ENCODE measurements at regions of chr5 and their contacts with region 1.

Region 1: DNA sequence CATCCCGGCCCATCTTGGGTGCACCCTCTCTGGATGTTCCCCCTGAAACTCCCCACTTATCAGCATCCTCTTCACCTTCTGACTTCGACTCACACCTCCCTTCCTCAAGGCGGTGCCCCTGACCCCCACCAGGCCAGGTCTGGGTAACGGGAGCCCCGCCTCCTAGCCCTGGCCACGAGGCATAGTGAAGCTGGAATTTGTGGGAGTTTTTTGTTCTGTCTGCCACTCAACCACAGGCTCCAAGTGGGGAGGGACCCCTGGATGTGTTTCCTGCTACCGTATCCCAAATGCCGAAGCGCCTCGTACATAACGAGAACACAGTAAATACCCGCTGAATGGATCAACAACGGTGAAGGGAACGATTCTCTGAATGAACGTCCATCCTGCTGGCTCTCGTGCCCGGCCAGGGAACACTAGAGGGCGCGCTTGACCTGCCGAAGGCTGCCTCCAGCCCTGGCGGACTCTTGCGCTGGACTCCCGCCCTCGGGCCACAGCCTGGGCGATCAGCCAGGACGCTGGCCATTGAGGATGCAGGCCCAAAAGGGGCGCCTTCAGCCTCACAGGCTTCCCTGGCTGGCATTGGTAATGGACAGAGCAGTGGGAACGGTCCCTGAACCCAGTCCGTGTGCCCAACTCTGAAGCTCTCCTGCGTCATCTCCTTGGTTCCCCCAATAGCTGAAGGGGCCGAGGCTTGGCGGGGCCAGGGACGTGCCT is 47.3 kb upstream of the PHYKPL start:
- DNase-seq: peak; percentile 59
- ATAC-seq: peak; percentile 97
- H3K4me3 ChIP-seq: no peak overlapping the region
- H3K27ac ChIP-seq: no peak overlapping the region
- H3K4me1 ChIP-seq: no peaks in the 10 kb centered on the region
- H3K27me3 ChIP-seq: no peaks in the 10 kb centered on the region; the same call in 1 of the 2 replicates
- CTCF ChIP-seq: peak; percentile 62
- POLR2A ChIP-seq: no peak
- RAD21 ChIP-seq: peak; percentile 70

Region 2: GRCh38 chr5:178551059-178551458 is 271.2 kb after region 1 on chr5:
- CTCF ChIA-PET with region 1: interaction called, 5 read pairs
- POLR2A ChIA-PET with region 1: no interaction called
- dilution Hi-C with region 1: no loop called
- in situ Hi-C with region 1: loop called (anchors 5 kb)
- intact Hi-C with region 1: loop called (anchors 1 kb)
- DNase-seq: peak; percentile 36
- ATAC-seq: peak; percentile 42; the same call in 1 of the 2 replicates
- H3K4me3 ChIP-seq: no peak overlapping the region
- H3K27ac ChIP-seq: no peak overlapping the region
- H3K4me1 ChIP-seq: no peaks in the 10 kb centered on the region
- H3K27me3 ChIP-seq: no peaks in the 10 kb centered on the region
- CTCF ChIP-seq: peak; percentile 32; the same call in 1 of the 2 replicates
- POLR2A ChIP-seq: no peak
- RAD21 ChIP-seq: no peak

Region 3: GRCh38 chr5:178590141-178590923 is 310.4 kb after region 1 on chr5 and contains the start of gene COL23A1:
- CTCF ChIA-PET with region 1: no interaction called
- POLR2A ChIA-PET with region 1: no interaction called
- dilution Hi-C with region 1: no loop called
- in situ Hi-C with region 1: no loop called
- intact Hi-C with region 1: loop called (anchors 1 kb)
- DNase-seq: peak; percentile 43
- ATAC-seq: peak; percentile 83
- H3K4me3 ChIP-seq: peak within 1 kb of the TSS; percentile 46
- H3K27ac ChIP-seq: no peak within 1 kb of the TSS
- H3K4me1 ChIP-seq: no peaks in the 10 kb centered on the region
- H3K27me3 ChIP-seq: peaks cover 28% of the 10 kb centered on the region
- CTCF ChIP-seq: peak; percentile 61
- POLR2A ChIP-seq: no peak
- RAD21 ChIP-seq: peak; percentile 55
- total RNA-seq, gene COL23A1: not detected in 2 replicates

Region 4: GRCh38 chr5:179495906-179496455 is 1216.1 kb after region 1 on chr5:
- CTCF ChIA-PET with region 1: no interaction called
- POLR2A ChIA-PET with region 1: no interaction called
- dilution Hi-C with region 1: no loop called
- in situ Hi-C with region 1: loop called (anchors 25 kb)
- intact Hi-C with region 1: loop called (anchors 5 kb)
- DNase-seq: no peak
- ATAC-seq: no peak
- H3K4me3 ChIP-seq: no peak overlapping the region
- H3K27ac ChIP-seq: no peak overlapping the region
- H3K4me1 ChIP-seq: peaks cover 2% of the 10 kb centered on the region; the same call in 1 of the 2 replicates
- H3K27me3 ChIP-seq: peaks cover 8% of the 10 kb centered on the region
- CTCF ChIP-seq: 0 out of 2 replicates have a peak, but pooled peaks have one; percentile 8
- POLR2A ChIP-seq: no peak
- RAD21 ChIP-seq: peak; percentile 11; the same call in 1 of the 2 replicates